ENCODE measurements at regions of chr14 and their contacts with region 1.

Region 1: GRCh38 chr14:69741055-69741454 is 25.9 kb upstream of the SRSF5 start:
- DNase-seq: peak; percentile 26 to 94
- H3K4me3 ChIP-seq: no peak overlapping the region
- H3K27ac ChIP-seq: peak overlapping the region; percentile 46
- H3K4me1 ChIP-seq: peaks cover 32% of the 10 kb centered on the region
- H3K27me3 ChIP-seq: no peaks in the 10 kb centered on the region
- CTCF ChIP-seq: no peak

Region 2: GRCh38 chr14:67837011-67837624 is 1903.9 kb before region 1 on chr14:
- CTCF ChIA-PET with region 1: no interaction called
- POLR2A ChIA-PET with region 1: no interaction called
- intact Hi-C with region 1: no loop called
- DNase-seq: peak; percentile 40 to 65
- H3K4me3 ChIP-seq: no peak overlapping the region
- H3K27ac ChIP-seq: no peak overlapping the region
- H3K4me1 ChIP-seq: no peaks in the 10 kb centered on the region
- H3K27me3 ChIP-seq: no peaks in the 10 kb centered on the region
- CTCF ChIP-seq: peak; percentile 79

Region 3: GRCh38 chr14:69685218-69685616 is 55.8 kb before region 1 on chr14:
- CTCF ChIA-PET with region 1: no interaction called
- POLR2A ChIA-PET with region 1: no interaction called
- intact Hi-C with region 1: no loop called
- DNase-seq: no peak
- H3K4me3 ChIP-seq: no peak overlapping the region
- H3K27ac ChIP-seq: no peak overlapping the region
- H3K4me1 ChIP-seq: no peaks in the 10 kb centered on the region
- H3K27me3 ChIP-seq: no peaks in the 10 kb centered on the region
- CTCF ChIP-seq: no peak

Region 4: GRCh38 chr14:69766984-69767368 is 25.9 kb after region 1 on chr14 and contains the start of gene SRSF5:
- CTCF ChIA-PET with region 1: no interaction called
- POLR2A ChIA-PET with region 1: interaction called, 22 read pairs
- intact Hi-C with region 1: loop called (anchors 1 kb)
- DNase-seq: peak; percentile 93 to 95
- H3K4me3 ChIP-seq: peak within 1 kb of the TSS; percentile 71
- H3K27ac ChIP-seq: peak within 1 kb of the TSS; percentile 97
- H3K4me1 ChIP-seq: peaks cover 23% of the 10 kb centered on the region
- H3K27me3 ChIP-seq: no peaks in the 10 kb centered on the region
- CTCF ChIP-seq: no peak
- total RNA-seq, gene SRSF5: 385 and 395 TPM in 2 replicates